ENCODE measurements at regions of chr11 and their contacts with region 1.

Region 1: GRCh38 chr11:34438529-34439507 is at the start of gene CAT:
- DNase-seq: peak; percentile 99
- H3K4me3 Mint-ChIP-seq: peak within 1 kb of the TSS; percentile 91
- H3K27ac Mint-ChIP-seq: peak within 1 kb of the TSS; percentile 89
- H3K4me1 Mint-ChIP-seq: peaks cover 32% of the 10 kb centered on the region
- H3K27me3 Mint-ChIP-seq: no peaks in the 10 kb centered on the region

Region 2: DNA sequence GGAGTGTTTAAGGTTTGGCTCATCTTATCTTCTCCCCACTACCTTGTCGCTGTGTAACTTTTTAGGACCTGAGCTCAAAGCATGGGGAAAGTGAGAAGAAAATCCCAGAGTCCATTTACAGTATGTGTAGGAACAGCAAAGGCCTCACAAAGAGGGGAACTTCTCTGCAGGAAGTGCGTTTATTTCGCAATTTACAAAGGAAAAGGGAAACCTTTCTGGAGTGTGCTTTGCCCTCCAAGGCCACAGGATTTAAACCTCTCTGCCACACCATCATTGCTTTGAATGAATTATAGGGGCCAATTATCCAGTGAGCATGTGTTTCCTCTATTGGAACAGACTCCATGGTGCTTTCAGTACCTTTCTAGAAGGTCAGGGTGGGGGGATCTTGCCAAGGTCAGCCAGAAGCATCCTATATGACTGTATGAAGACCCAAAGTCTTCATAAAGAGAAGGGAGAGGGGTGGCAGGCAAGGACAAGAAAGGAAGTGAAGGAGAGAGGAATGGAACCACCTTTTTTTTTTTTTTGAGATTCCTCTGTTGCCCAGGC is 478.9 kb before region 1 on chr11:
- CTCF ChIA-PET with region 1: no interaction called
- DNase-seq: no peak
- H3K4me3 Mint-ChIP-seq: no peak overlapping the region
- H3K27ac Mint-ChIP-seq: no peak overlapping the region
- H3K4me1 Mint-ChIP-seq: no peaks in the 10 kb centered on the region
- H3K27me3 Mint-ChIP-seq: peaks cover 32% of the 10 kb centered on the region

Region 3: DNA sequence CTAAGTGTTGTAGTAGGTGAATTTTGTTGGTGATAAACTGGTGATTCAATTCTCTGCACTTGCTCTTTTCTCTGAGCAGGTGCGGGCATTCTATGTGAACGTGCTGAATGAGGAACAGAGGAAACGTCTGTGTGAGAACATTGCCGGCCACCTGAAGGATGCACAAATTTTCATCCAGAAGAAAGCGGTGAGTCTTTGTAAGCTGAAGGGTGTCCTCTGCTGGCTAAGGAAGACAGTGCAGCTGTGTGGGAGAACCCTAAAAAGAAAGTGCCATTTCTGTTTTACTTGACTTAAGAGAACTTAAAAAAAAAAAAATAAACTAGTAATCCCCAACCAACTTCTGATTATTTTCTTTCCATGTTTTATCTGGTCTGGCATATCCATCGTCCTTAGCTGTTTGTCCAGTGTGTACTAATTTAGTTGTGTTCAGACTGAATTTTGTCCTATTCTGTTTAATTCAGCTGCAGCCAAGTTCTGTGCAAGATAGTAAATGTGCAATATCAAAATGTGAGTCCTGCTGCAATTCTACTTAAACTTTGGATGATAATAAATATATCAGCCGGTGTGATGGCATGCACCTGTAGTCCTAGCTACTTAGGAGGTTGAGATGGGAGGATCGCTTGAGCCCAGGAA is 29.5 kb after region 1 on chr11:
- CTCF ChIA-PET with region 1: interaction called, 13 read pairs
- DNase-seq: peak; percentile 67
- H3K4me3 Mint-ChIP-seq: no peak overlapping the region
- H3K27ac Mint-ChIP-seq: no peak overlapping the region
- H3K4me1 Mint-ChIP-seq: peaks cover 9% of the 10 kb centered on the region
- H3K27me3 Mint-ChIP-seq: no peaks in the 10 kb centered on the region